ENCODE measurements at regions of chr12 and their contacts with region 1.

Region 1: DNA sequence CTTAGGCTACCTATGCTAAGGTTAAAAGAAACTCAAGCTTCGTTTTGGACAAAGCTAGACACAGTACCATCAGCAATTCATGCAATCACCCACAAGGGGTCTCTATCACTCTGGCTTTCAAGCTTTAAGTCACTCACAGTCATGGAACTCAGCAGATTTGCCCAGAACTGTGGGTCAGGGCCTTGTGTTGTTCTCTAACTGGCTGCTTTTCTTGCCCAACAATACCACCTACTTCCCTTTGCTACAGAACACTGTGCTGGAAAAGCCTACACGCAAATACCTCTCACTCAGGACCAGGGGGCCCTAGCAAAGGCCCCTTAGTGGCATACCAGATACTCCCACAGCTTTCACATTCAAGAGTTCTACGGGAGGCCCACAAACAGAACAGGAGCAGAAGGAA is 9.1 kb downstream of the NEMP1 start:
- DNase-seq: peak in 2 of 6 donors; percentile 56 to 71
- ATAC-seq: peak; percentile 96 to 100 (median 99)
- H3K4me3 ChIP-seq: no peak overlapping the region
- H3K27ac ChIP-seq: peak overlapping the region in 1 of 4 donors; percentile 30
- H3K4me1 ChIP-seq: peaks cover 0 to 3% (median 0%) of the 10 kb centered on the region in 3 donors
- H3K27me3 ChIP-seq: no peaks in the 10 kb centered on the region
- CTCF ChIP-seq: peak; percentile 74 to 86 (median 79)

Region 2: DNA sequence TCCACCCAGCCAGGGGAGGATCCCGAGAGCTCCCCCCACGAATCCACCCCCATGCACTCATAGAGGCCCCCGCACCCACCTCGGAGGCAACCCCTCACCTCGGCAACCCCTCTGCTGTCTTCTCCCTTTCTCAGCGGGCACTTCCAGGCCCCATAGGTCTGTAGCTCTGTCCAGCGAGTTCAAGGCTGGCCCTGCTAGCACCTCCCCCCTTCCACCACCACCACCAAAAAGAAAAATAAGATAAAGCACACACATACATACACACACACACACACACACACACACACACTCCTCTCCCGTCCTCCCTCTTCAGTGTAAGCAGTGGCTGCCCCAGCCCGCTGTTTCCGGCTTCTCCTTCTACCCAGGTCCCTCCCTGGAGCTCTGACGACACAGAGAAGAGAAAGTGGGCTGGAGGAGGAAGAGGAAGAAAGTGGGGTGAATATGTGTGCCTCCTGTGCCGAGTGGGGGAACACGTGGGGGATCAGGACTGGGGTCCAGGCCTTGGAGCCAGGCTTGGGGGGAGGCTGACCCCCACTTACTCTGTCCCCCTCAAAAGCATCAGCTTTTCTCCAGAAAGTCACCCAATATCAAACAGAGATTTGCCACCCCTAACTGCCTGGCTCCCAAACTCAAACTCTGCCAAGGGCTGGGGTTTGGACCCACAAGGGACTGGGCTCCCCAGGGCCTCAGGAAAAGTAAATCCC is 41.7 kb after region 1 on chr12 and contains the start of gene STAT6:
- intact Hi-C with region 1: loop called in 2 of 3 experiments (anchors 5 kb)
- DNase-seq: peak in 5 of 6 donors; percentile 75 to 88 (median 79)
- ATAC-seq: peak; percentile 75 to 84 (median 76)
- H3K4me3 ChIP-seq: peak within 1 kb of the TSS; percentile 38 to 71 (median 68)
- H3K27ac ChIP-seq: peak within 1 kb of the TSS; percentile 96 to 98 (median 97)
- H3K4me1 ChIP-seq: peaks cover 0 to 11% (median 0%) of the 10 kb centered on the region in 3 donors
- H3K27me3 ChIP-seq: no peaks in the 10 kb centered on the region
- CTCF ChIP-seq: no peak
- total RNA-seq, gene STAT6: 31.0 to 116 (median 51.9) TPM

Region 3: GRCh38 chr12:57175428-57176138 is 106.1 kb after region 1 on chr12:
- intact Hi-C with region 1: loop called in 1 of 3 experiments (anchors 10 kb)
- DNase-seq: peak in 5 of 6 donors; percentile 43 to 88 (median 71)
- ATAC-seq: peak; percentile 61 to 75 (median 70)
- H3K4me3 ChIP-seq: no peak overlapping the region
- H3K27ac ChIP-seq: no peak overlapping the region
- H3K4me1 ChIP-seq: no peaks in the 10 kb centered on the region
- H3K27me3 ChIP-seq: no peaks in the 10 kb centered on the region
- CTCF ChIP-seq: peak in 3 of 4 donors; percentile 20 to 44 (median 36)

Measured in pancreas (tissue), 10 donors.